GM10248 (cell line): ENCODE measurements at regions of chr9 and their contacts with region 1.

Region 1: GRCh38 chr9:114653556-114654159 is 3.9 kb downstream of the TEX53 start:
- DNase-seq: peak; percentile 77
- CTCF ChIP-seq: peak; percentile 88

Region 2: DNA sequence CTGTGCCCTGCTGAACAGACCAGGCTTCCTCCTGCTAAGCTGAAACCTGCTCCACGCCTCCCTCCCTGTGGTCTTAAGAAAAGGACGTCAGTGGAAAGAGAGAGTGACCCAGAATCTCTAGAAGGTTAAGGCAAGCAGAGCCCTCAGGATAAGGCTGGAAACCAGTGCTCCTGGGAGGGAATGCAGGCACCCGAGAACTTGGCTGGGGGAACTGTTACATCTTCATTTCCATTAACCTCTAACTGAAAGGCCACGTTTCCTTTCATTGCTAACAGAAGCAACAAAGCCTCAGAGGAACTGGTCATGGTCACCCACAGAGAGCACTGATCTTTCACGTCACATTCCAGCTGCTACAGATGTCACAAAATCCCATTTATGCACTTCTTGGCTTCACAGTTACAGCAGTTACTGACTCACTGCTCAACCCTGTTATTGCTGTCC is 239.8 kb before region 1 on chr9:
- CTCF ChIA-PET with region 1: interaction called, 173 read pairs
- POLR2A ChIA-PET with region 1: no interaction called
- DNase-seq: peak; percentile 44
- CTCF ChIP-seq: no peak

Region 3: GRCh38 chr9:114472765-114473446 is 180.8 kb before region 1 on chr9:
- CTCF ChIA-PET with region 1: interaction called, 12 read pairs
- POLR2A ChIA-PET with region 1: no interaction called
- DNase-seq: no peak
- CTCF ChIP-seq: no peak

Region 4: GRCh38 chr9:114538241-114538640 is 115.4 kb before region 1 on chr9:
- CTCF ChIA-PET with region 1: interaction called, 14 read pairs
- POLR2A ChIA-PET with region 1: no interaction called
- DNase-seq: no peak
- CTCF ChIP-seq: peak; percentile 36

Region 5: DNA sequence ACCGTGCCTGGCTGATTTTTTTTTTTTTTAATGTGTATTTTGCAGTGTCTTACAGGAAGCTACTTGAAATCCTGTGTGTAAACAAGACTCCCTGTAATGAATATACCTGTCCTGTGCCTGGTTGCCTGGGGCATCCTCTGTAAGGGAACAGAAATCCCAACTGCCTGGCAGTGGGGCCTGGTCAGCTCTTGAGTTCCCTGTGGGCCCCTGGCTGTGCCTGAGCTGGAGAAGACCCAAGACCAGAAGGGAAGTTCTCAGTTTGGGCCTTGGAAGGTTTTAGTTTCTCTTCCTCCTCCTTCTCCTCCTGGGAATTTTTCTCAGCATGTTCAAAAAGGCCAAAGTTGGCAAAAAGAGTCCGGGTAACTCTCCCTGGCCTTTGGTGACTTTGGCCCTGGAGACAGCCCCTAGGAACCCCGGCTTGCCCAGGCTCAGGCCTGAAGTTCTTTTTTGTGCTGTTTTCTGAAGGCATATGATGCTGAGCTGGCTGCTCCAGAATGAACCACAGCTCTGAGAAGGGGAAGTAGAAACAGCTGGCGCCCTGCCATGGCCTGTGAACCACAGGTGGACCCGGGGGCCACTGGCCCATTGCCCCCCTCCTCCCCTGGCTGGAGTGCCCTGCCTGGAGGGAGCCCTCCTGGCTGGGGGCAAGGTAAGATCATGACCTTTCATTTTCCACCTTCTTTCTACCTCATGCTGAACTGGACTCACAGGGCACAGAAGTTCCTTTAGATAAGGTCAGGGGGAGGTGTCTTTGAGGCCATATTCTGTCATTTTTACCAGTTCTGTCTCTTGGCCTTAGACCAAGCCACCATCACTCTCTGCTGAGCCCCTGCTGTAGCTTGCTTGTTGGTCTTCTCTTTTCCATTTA is 36.8 kb before region 1 on chr9:
- CTCF ChIA-PET with region 1: interaction called, 32 read pairs
- POLR2A ChIA-PET with region 1: no interaction called
- DNase-seq: peak; percentile 68
- CTCF ChIP-seq: no peak

Region 6: GRCh38 chr9:114681594-114682332 is 28.1 kb after region 1 on chr9 and contains the start of gene TEX48:
- CTCF ChIA-PET with region 1: interaction called, 18 read pairs
- POLR2A ChIA-PET with region 1: no interaction called
- DNase-seq: peak; percentile 73
- CTCF ChIP-seq: peak; percentile 87

Region 7: DNA sequence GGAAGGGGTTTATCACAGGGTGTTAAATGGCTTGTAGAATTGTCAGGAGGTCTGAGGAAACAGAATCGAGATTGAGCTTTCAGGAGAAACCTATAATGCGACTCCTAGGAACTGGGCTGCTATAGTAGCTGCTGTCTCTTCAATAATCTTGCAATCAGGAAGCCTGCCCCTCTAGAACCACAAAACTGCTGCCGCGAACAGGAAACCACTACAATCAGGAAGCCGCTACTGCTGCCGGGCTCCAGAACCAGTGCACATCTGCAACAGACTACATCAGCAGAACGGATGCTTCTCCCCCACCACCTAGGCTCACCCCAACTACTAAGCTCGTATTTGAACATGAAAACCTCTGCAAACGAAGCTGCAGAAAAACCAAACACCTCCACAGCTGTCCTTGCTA is 245.1 kb after region 1 on chr9:
- CTCF ChIA-PET with region 1: no interaction called
- POLR2A ChIA-PET with region 1: no interaction called
- DNase-seq: peak; percentile 28
- CTCF ChIP-seq: no peak